ENCODE measurements at regions of chr13 and their contacts with region 1.

Region 1: DNA sequence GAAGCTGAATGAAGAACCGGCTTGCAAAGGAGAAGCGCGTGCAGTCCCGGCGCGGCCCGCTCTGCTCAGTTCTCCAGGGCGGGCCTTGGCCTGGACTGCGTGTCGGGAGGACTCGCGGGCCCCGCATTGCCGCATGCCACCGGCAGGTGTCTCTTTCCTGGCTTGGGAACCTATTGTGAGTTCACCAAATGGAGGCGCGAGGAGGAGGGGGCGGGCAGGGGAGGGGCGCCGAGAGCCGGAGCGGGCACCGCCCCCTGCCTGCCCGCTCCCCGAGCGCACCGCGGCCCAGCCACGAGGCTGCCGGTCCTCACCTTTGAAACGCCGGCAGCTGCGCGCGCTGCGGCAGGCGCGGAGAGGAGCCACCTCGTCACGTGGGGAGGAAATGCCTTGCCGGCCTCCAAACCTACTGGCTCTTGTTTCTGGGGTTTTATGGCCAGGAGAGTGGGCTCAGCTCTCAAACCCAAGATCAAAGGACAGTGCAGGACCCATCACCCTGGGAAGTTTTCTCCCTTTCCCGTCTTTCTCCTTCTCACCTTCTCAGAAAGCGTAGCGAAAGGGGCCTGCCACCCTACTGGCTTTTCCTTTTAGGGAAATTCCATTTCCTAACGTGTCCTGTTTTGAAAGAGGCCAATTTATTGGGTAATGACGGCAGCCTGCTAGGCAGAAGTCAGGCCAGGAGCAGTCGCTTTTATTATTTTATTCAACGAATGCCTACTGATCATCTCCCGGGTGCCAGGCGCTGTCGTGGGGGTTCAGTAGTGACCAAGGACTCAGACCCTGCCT is 13.8 kb upstream of the UBE2L5 start:
- DNase-seq: peak; percentile 95 to 97
- ATAC-seq: peak; percentile 95 to 98 (median 96)
- H3K4me3 ChIP-seq: peak overlapping the region in 9 of 10 donors; percentile 23 to 56 (median 48)
- H3K27ac ChIP-seq: peak overlapping the region; percentile 27 to 92 (median 84)
- H3K4me1 ChIP-seq: peaks cover 0 to 28% (median 11%) of the 10 kb centered on the region in 9 donors
- H3K27me3 ChIP-seq: no peaks in the 10 kb centered on the region
- CTCF ChIP-seq: peak; percentile 71 to 83 (median 79)

Region 2: GRCh38 chr13:30045916-30046704 is 362.4 kb before region 1 on chr13:
- intact Hi-C with region 1: no loop called
- DNase-seq: no peak
- ATAC-seq: no peak
- H3K4me3 ChIP-seq: no peak overlapping the region
- H3K27ac ChIP-seq: no peak overlapping the region
- H3K4me1 ChIP-seq: peaks cover 0 to 3% (median 0%) of the 10 kb centered on the region in 9 donors
- H3K27me3 ChIP-seq: peaks cover 0 to 7% (median 5%) of the 10 kb centered on the region in 7 donors
- CTCF ChIP-seq: no peak

Region 3: DNA sequence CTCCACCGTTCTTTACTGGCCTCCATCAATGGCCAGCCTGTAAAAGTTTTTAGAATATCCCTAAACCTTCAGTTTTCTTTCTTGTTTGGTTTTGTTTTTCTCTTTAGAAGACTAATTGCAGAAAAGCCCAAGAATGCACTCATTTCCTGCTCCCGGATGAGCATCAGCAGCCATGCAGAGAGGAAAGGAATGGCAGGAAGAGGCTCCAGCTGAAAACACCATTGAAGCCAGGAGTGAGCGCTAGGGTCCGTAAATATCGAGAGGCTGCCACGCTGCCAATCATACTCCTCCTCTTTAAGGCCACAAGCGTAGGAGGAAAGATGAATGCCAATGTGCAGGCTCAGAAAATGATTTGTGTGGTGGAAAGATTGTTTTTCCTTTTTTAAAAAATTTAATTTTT is 43.6 kb before region 1 on chr13:
- intact Hi-C with region 1: loop called in 1 of 10 experiments (anchors 1 kb)
- DNase-seq: peak in 1 of 2 donors; percentile 17
- ATAC-seq: peak in 4 of 8 donors; percentile 41 to 69 (median 68)
- H3K4me3 ChIP-seq: peak overlapping the region in 1 of 10 donors; percentile 10
- H3K27ac ChIP-seq: peak overlapping the region in 9 of 10 donors; percentile 38 to 82 (median 57)
- H3K4me1 ChIP-seq: peaks cover 0 to 42% (median 31%) of the 10 kb centered on the region in 9 donors
- H3K27me3 ChIP-seq: no peaks in the 10 kb centered on the region
- CTCF ChIP-seq: no peak

Region 4: GRCh38 chr13:30443957-30444404 is 35.5 kb after region 1 on chr13:
- intact Hi-C with region 1: loop called in 3 of 10 experiments (anchors 2 to 5 kb)
- DNase-seq: no peak
- ATAC-seq: no peak
- H3K4me3 ChIP-seq: no peak overlapping the region
- H3K27ac ChIP-seq: no peak overlapping the region
- H3K4me1 ChIP-seq: peaks cover 0 to 26% (median 16%) of the 10 kb centered on the region in 9 donors
- H3K27me3 ChIP-seq: no peaks in the 10 kb centered on the region
- CTCF ChIP-seq: no peak

Region 5: GRCh38 chr13:30572859-30573275 is 164.4 kb after region 1 on chr13:
- intact Hi-C with region 1: loop called in 1 of 10 experiments (anchors 5 kb)
- DNase-seq: peak in 1 of 2 donors; percentile 42
- ATAC-seq: peak in 6 of 8 donors; percentile 75 to 82 (median 77)
- H3K4me3 ChIP-seq: peak overlapping the region in 9 of 10 donors; percentile 25 to 51 (median 39)
- H3K27ac ChIP-seq: peak overlapping the region in 8 of 10 donors; percentile 38 to 80 (median 62)
- H3K4me1 ChIP-seq: peaks cover 0 to 57% (median 25%) of the 10 kb centered on the region in 9 donors
- H3K27me3 ChIP-seq: no peaks in the 10 kb centered on the region
- CTCF ChIP-seq: peak in 6 of 9 donors; percentile 16 to 59 (median 48)

Region 6: DNA sequence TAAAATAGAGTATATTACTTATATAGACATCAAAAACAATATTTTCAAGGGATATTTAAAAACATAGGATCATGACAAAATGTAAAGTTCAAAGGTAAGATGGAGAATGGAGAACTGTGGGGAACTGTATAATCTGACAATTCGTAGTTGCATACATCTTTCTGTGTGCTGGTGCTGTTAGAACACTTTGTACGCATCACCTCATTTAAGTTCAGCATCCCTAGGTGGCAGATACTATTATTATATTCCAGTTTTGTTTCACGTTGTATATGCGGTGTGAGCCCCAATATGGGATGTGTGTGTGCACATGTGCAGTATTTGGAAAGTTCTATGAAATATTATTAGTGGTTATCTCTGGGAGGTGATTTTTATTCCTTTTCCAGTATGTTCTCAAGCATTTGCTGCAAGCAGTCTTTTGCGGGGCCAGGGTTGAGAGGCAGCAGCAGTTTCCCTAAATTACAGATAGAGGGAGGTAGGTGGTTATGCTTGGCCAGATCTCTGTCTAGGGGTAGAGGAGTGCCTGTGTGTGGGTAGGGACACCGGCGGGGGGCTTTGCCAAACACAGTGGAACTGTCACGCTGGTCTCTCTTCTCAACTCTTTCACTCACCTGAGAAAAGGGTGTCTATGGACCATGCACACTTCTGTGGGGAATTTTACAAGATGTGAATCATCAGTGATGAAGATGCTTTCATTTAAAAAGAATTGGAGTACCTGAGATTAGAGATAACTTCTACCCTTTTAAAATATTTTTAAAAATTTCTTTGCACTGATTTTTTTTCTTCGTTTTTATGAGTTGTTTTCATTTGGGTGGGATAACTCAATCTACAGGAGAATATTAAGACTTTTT is 271.2 kb after region 1 on chr13:
- intact Hi-C with region 1: no loop called
- DNase-seq: no peak
- ATAC-seq: peak in 7 of 8 donors; percentile 45 to 81 (median 74)
- H3K4me3 ChIP-seq: no peak overlapping the region
- H3K27ac ChIP-seq: no peak overlapping the region
- H3K4me1 ChIP-seq: peaks cover 0 to 19% (median 0%) of the 10 kb centered on the region in 9 donors
- H3K27me3 ChIP-seq: no peaks in the 10 kb centered on the region
- CTCF ChIP-seq: peak in 8 of 9 donors; percentile 12 to 70 (median 58)

Region 7: GRCh38 chr13:30802953-30803478 is 394.5 kb after region 1 on chr13:
- intact Hi-C with region 1: loop called in 2 of 10 experiments (anchors 5 kb)
- DNase-seq: peak; percentile 82 to 88
- ATAC-seq: peak; percentile 95 to 98 (median 96)
- H3K4me3 ChIP-seq: peak overlapping the region in 9 of 10 donors; percentile 26 to 57 (median 50)
- H3K27ac ChIP-seq: peak overlapping the region in 5 of 10 donors; percentile 10 to 61 (median 40)
- H3K4me1 ChIP-seq: peaks cover 0 to 28% (median 23%) of the 10 kb centered on the region in 9 donors
- H3K27me3 ChIP-seq: no peaks in the 10 kb centered on the region
- CTCF ChIP-seq: peak; percentile 86 to 99 (median 97)